ENCODE measurements at regions of chr20 and their contacts with region 1.

Region 1: DNA sequence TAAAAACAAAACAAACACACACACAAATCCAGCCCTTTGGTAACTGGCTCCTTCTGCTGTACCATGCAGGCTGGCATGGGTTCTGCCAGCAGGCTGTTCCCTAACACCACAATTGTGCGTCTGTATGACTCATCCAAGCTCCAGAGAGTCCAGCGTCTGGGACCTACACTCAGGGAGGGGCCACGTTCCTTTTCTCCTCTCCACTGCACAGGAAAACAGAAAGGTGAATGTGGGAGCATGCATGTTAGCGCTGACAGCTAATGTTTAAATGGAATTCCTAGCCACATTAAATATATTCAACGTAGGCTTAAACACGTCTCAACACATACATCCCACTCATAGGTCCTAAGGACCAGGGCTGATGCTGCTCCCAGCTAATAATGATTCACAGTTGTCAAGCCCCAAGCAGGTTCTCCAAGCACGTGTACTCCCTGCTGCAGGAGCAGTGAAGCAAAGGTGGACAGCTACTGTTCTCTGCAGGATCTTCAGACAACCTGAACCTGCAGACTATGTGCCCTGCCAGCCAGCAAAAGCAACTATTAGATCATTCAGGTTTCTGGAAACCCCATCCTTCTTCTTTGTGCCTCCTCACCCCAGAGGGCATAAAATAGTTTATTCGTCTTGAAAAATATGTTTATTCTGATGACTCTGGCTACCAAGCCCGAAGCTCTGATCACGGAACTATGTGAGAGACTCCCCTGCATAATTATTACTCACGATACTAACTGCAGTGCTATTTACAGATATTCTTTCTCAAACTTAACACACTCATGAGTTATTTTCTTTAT is 20.9 kb downstream of the MAP1LC3A start:
- DNase-seq: peak; percentile 85
- H3K4me3 ChIP-seq: no peak overlapping the region
- H3K27ac ChIP-seq: peak overlapping the region; percentile 34
- H3K4me1 ChIP-seq: peaks cover 12% of the 10 kb centered on the region
- H3K27me3 ChIP-seq: no peaks in the 10 kb centered on the region
- CTCF ChIP-seq: peak; percentile 52

Region 2: GRCh38 chr20:33984182-33984719 is 595.1 kb before region 1 on chr20:
- intact Hi-C with region 1: no loop called
- DNase-seq: no peak
- H3K4me3 ChIP-seq: no peak overlapping the region
- H3K27ac ChIP-seq: no peak overlapping the region
- H3K4me1 ChIP-seq: no peaks in the 10 kb centered on the region
- H3K27me3 ChIP-seq: no peaks in the 10 kb centered on the region
- CTCF ChIP-seq: no peak

Region 3: GRCh38 chr20:34390769-34391452 is 188.5 kb before region 1 on chr20:
- intact Hi-C with region 1: no loop called
- DNase-seq: peak; percentile 51
- H3K4me3 ChIP-seq: no peak overlapping the region
- H3K27ac ChIP-seq: no peak overlapping the region
- H3K4me1 ChIP-seq: peaks cover 14% of the 10 kb centered on the region
- H3K27me3 ChIP-seq: no peaks in the 10 kb centered on the region
- CTCF ChIP-seq: no peak

Region 4: DNA sequence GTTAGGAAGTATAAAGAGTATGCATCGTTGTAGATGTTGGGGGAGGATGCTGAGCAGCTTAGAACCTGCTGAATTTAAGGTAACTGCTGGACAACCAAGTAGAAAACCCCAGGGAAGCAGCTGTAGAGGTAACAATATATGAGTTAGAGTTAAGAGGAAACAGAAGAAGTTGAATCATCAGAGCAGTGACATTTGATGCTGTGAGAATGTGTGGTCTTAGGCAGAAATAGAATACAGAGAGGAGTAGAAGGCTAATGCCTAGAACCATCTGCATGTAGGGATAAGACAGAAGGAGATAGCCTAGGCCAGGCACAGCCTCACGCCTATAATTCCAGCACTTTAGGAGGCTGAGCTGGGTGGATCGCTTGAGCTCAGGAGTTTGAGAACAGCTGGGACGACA is 85.7 kb before region 1 on chr20:
- intact Hi-C with region 1: no loop called
- DNase-seq: no peak
- H3K4me3 ChIP-seq: no peak overlapping the region
- H3K27ac ChIP-seq: no peak overlapping the region
- H3K4me1 ChIP-seq: no peaks in the 10 kb centered on the region
- H3K27me3 ChIP-seq: no peaks in the 10 kb centered on the region
- CTCF ChIP-seq: no peak

Region 5: GRCh38 chr20:34704177-34705007 is 125.0 kb after region 1 on chr20 and contains the start of gene TP53INP2:
- intact Hi-C with region 1: loop called (anchors 5 kb)
- DNase-seq: peak; percentile 96
- H3K4me3 ChIP-seq: peak within 1 kb of the TSS; percentile 81
- H3K27ac ChIP-seq: peak within 1 kb of the TSS; percentile 95
- H3K4me1 ChIP-seq: peaks cover 3% of the 10 kb centered on the region
- H3K27me3 ChIP-seq: no peaks in the 10 kb centered on the region
- CTCF ChIP-seq: no peak
- total RNA-seq, gene TP53INP2: 38.1 to 60.9 TPM

Region 6: GRCh38 chr20:34768096-34768495 is 188.7 kb after region 1 on chr20:
- intact Hi-C with region 1: loop called (anchors 5 kb)
- DNase-seq: no peak
- H3K4me3 ChIP-seq: no peak overlapping the region
- H3K27ac ChIP-seq: no peak overlapping the region
- H3K4me1 ChIP-seq: no peaks in the 10 kb centered on the region
- H3K27me3 ChIP-seq: no peaks in the 10 kb centered on the region
- CTCF ChIP-seq: no peak

Measured in colonic mucosa (tissue), 4 donors.